B cell (primary cell): ENCODE measurements at regions of chr13 and their contacts with region 1.

Region 1: DNA sequence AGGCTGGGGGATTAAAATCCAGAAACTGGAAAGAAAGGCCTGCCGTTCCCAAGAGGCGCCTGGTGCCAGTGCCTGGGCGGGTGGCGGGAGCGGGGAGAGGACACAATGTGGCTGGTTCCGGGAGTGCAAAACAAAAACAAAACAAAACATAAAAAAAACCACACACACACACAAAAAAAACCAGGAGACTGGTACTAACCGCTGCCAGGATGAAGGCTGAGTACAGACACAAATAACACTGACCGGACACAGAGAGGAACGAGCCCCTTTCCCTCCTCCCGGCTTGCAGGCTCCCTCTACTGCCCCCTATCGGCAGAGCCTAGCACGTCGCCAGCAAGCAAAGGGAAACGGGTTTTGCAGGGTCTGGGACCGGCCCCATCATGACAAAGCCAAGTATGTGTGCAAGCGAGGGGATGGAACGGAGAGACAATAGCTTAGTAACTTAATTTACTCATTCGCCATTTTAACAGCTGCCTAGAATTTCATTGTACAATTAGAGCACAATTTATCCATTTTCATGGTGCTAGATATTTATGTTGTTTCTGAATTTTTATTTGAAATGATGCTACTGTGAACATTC is 17.9 kb upstream of the ZDHHC20 start:
- DNase-seq: peak; percentile 82
- ATAC-seq: peak; percentile 89
- H3K4me3 ChIP-seq: peak overlapping the region in 4 of 5 experiments; percentile 38 to 61 (median 49)
- H3K4me3 Mint-ChIP-seq: peak overlapping the region; percentile 92
- H3K27ac ChIP-seq: no peak overlapping the region
- H3K27ac Mint-ChIP-seq: peak overlapping the region; percentile 38
- H3K4me1 ChIP-seq: peaks cover 7 to 8% of the 10 kb centered on the region in 2 donors
- H3K4me1 Mint-ChIP-seq: peaks cover 16% of the 10 kb centered on the region
- H3K27me3 ChIP-seq: peaks cover 0 to 4% (median 2%) of the 10 kb centered on the region in 4 experiments
- H3K27me3 Mint-ChIP-seq: no peaks in the 10 kb centered on the region
- CTCF ChIP-seq: peak; percentile 92

Region 2: DNA sequence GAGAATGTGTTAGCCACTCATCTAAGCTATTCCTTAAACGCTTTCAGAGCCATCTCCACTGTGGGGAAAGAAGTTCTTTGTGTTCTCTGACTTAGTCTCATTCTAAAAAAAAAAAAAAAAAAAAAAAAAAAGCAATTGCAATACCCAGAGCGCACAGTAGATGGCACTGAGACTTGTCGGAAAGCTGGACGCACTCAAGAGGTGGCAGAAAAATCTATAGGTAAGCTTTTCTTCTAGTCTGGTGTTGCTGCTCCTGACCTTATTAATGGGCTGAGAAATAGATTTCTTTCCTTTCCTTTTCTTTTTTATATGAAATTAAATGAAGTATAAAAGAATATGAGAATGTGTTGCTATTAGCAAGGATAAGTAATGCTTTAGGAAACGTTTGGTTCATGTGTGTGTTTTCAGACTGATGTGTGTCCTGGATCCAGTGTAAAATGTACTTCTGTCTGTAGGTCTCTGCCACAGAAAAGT is 1279.6 kb before region 1 on chr13:
- CTCF ChIA-PET with region 1: interaction called, 3 read pairs
- POLR2A ChIA-PET with region 1: no interaction called
- intact Hi-C with region 1: loop called (anchors 5 kb)
- DNase-seq: peak; percentile 61
- ATAC-seq: peak; percentile 76
- H3K4me3 ChIP-seq: no peak overlapping the region
- H3K4me3 Mint-ChIP-seq: no peak overlapping the region
- H3K27ac ChIP-seq: no peak overlapping the region
- H3K27ac Mint-ChIP-seq: no peak overlapping the region
- H3K4me1 ChIP-seq: peaks cover 18 to 28% of the 10 kb centered on the region in 2 donors
- H3K4me1 Mint-ChIP-seq: peaks cover 18% of the 10 kb centered on the region
- H3K27me3 ChIP-seq: peaks cover 2 to 44% (median 44%) of the 10 kb centered on the region in 4 experiments
- H3K27me3 Mint-ChIP-seq: peaks cover 60% of the 10 kb centered on the region
- CTCF ChIP-seq: peak; percentile 84

Region 3: DNA sequence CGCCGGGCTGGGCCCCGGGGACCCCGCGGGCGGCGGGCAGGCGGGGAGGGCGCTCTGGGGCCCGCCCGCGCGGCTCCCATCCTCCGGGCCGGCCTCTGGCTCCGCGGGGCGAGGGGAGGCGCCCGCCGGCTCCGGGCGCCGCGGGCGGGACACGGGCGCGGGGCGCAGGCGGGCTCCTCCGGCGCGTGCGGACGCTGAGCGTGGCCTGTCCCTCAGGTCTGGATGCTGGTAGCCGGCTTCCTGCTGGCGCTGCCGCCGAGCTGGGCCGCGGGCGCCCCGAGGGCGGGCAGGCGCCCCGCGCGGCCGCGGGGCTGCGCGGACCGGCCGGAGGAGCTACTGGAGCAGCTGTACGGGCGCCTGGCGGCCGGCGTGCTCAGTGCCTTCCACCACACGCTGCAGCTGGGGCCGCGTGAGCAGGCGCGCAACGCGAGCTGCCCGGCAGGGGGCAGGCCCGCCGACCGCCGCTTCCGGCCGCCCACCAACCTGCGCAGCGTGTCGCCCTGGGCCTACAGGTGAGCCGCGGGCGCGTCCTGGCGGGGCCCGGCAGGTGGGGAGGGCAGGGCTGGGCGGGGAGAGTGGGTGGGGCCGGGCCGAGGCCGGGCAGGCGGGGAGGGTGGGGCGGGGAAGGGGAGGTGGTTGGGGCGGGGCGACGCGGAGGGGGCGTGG is 773.1 kb before region 1 on chr13:
- CTCF ChIA-PET with region 1: no interaction called
- POLR2A ChIA-PET with region 1: no interaction called
- intact Hi-C with region 1: loop called (anchors 1 kb)
- DNase-seq: peak; percentile 88
- ATAC-seq: peak; percentile 88
- H3K4me3 ChIP-seq: peak overlapping the region in 3 of 5 experiments; percentile 15 to 40 (median 29)
- H3K4me3 Mint-ChIP-seq: peak overlapping the region; percentile 52
- H3K27ac ChIP-seq: no peak overlapping the region
- H3K27ac Mint-ChIP-seq: no peak overlapping the region
- H3K4me1 ChIP-seq: peaks cover 11 to 12% of the 10 kb centered on the region in 2 donors
- H3K4me1 Mint-ChIP-seq: peaks cover 12% of the 10 kb centered on the region
- H3K27me3 ChIP-seq: peaks cover 0 to 27% (median 18%) of the 10 kb centered on the region in 4 experiments
- H3K27me3 Mint-ChIP-seq: peaks cover 16% of the 10 kb centered on the region
- CTCF ChIP-seq: peak; percentile 43

Region 4: GRCh38 chr13:21109168-21109567 is 367.8 kb before region 1 on chr13:
- CTCF ChIA-PET with region 1: interaction called, 23 read pairs
- POLR2A ChIA-PET with region 1: no interaction called
- intact Hi-C with region 1: no loop called
- DNase-seq: no peak
- ATAC-seq: no peak
- H3K4me3 ChIP-seq: no peak overlapping the region
- H3K4me3 Mint-ChIP-seq: no peak overlapping the region
- H3K27ac ChIP-seq: no peak overlapping the region
- H3K27ac Mint-ChIP-seq: no peak overlapping the region
- H3K4me1 ChIP-seq: no peaks in the 10 kb centered on the region
- H3K4me1 Mint-ChIP-seq: no peaks in the 10 kb centered on the region
- H3K27me3 ChIP-seq: no peaks in the 10 kb centered on the region
- H3K27me3 Mint-ChIP-seq: no peaks in the 10 kb centered on the region
- CTCF ChIP-seq: no peak

Region 5: DNA sequence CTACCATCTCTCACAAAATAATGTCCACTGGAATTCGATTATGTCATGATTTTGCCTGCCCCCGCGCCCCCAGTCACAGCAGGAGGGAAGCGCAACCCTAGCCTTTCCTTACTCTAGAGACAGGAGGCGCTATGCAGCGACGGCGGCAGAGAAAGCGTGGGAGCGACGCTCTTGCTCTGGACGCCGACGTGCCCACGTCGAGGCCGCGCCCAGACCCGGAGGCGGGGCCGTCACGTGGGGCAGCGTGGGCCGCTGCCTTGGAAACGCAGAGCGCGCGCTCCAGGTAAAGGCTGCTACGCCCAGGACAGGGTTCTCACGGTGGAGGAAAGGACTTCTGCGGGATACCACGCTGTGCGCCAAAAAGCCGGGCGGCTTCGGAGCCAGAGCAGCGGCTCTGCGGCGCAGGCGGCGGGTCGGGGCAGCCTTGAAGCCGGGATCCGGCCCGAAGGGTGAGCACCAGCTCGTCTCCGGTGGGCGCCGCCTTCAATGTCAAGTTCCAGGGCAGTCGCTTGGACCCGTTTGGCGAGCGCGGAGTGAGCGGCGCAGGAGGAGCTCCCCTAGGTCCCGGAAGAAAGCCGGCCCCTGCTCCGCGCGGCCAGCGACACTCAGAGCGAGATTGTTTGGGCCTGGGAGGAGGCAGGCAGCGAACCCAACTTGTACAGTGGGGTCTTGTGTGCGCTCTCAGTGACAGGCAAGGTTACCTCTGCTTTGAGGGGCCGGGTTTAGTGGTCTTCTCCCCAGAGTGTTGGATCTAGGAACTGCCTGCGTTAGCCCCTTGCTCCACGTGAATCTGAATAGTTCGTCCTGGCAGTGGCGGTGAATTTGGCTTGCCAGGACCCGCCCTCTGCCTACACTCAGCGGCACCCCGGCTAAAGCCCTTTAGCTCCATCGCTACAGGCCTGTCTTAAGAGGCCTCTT is 178.8 kb before region 1 on chr13:
- CTCF ChIA-PET with region 1: interaction called, 83 read pairs
- POLR2A ChIA-PET with region 1: no interaction called
- intact Hi-C with region 1: loop called (anchors 1 kb)
- DNase-seq: peak; percentile 93
- ATAC-seq: peak; percentile 96
- H3K4me3 ChIP-seq: peak overlapping the region; percentile 8 to 88 (median 75)
- H3K4me3 Mint-ChIP-seq: peak overlapping the region; percentile 89
- H3K27ac ChIP-seq: peak overlapping the region; percentile 7 to 77
- H3K27ac Mint-ChIP-seq: peak overlapping the region; percentile 89
- H3K4me1 ChIP-seq: peaks cover 15 to 18% of the 10 kb centered on the region in 2 donors
- H3K4me1 Mint-ChIP-seq: peaks cover 17% of the 10 kb centered on the region
- H3K27me3 ChIP-seq: no peaks in the 10 kb centered on the region
- H3K27me3 Mint-ChIP-seq: no peaks in the 10 kb centered on the region
- CTCF ChIP-seq: peak; percentile 93

Region 6: DNA sequence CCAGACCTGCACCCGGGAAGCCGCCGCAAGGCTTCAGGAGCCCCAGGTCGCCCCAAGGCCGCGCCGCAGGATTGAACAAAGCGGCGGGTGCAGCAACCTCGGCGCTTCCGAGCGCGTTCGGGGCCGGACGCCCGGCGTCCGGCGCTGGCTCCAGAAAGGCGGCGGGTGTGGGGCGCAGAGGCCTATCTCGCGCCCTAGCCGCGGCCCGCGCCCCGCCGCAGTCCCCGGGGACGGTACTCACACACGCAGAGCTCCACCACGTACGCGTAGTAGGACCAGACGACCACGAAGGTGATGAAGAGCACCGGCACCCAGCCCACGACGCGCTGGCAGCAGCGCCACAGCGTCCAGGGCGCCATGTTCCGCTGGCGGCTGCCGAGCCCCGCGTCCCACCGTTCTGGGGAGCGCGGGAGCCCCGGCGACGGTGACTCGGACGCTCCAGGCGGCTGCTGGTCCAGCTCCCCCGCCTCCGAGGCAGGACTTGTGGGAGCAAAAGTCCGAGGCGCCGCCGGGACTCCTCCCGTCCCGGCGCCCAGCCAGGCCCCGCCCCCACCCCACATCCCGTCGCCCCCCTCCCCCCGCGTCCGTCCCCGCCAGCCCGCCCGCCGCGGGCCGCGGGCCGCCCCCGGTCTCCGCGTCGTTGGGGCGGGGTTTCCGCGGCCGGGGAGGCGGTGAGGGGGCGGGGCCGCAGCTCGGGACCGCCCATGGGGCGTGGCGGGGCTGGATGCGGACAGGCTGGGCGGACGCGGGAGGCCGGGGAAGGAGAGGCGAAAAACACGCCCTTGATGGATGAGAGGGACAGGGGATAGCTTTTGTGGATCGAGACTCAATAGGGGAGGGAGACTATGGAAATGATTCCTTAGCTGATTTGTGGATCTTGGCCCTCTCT is 17.9 kb before region 1 on chr13 and contains the start of gene ZDHHC20:
- CTCF ChIA-PET with region 1: interaction called, 24 read pairs
- POLR2A ChIA-PET with region 1: interaction called, 3 read pairs
- intact Hi-C with region 1: loop called (anchors 1 kb)
- DNase-seq: peak; percentile 91
- ATAC-seq: peak; percentile 93
- H3K4me3 ChIP-seq: peak within 1 kb of the TSS; percentile 51 to 94 (median 85)
- H3K4me3 Mint-ChIP-seq: peak within 1 kb of the TSS; percentile 93
- H3K27ac ChIP-seq: peak within 1 kb of the TSS; percentile 64 to 86
- H3K27ac Mint-ChIP-seq: peak within 1 kb of the TSS; percentile 96
- H3K4me1 ChIP-seq: peaks cover 13 to 17% of the 10 kb centered on the region in 2 donors
- H3K4me1 Mint-ChIP-seq: peaks cover 34% of the 10 kb centered on the region
- H3K27me3 ChIP-seq: no peaks in the 10 kb centered on the region
- H3K27me3 Mint-ChIP-seq: no peaks in the 10 kb centered on the region
- CTCF ChIP-seq: no peak
- total RNA-seq, gene ZDHHC20: 57.7 and 61.5 TPM in 2 replicates